ENCODE measurements at regions of chr7 and their contacts with region 1.

Region 1: GRCh38 chr7:141533149-141533949 is 17.9 kb upstream of the AGK start:
- DNase-seq: peak in 4 of 5 donors; percentile 50 to 58 (median 51)
- H3K4me3 ChIP-seq: no peak overlapping the region
- H3K4me3 Mint-ChIP-seq: no peak overlapping the region
- H3K27ac ChIP-seq: no peak overlapping the region
- H3K27ac Mint-ChIP-seq: peak overlapping the region in 4 of 7 donors; percentile 4 to 65 (median 25)
- H3K4me1 ChIP-seq: no peaks in the 10 kb centered on the region
- H3K4me1 Mint-ChIP-seq: peaks cover 0 to 4% (median 1%) of the 10 kb centered on the region in 4 donors
- H3K27me3 ChIP-seq: peaks cover 5% of the 10 kb centered on the region
- H3K27me3 Mint-ChIP-seq: peaks cover 14 to 24% of the 10 kb centered on the region in 2 donors

Region 2: GRCh38 chr7:140924019-140924820 is 609.1 kb before region 1 on chr7:
- CTCF ChIA-PET with region 1: no interaction called
- POLR2A ChIA-PET with region 1: no interaction called
- intact Hi-C with region 1: loop called (anchors 10 kb)
- DNase-seq: peak; percentile 79 to 92 (median 83)
- H3K4me3 ChIP-seq: peak overlapping the region; percentile 68 to 90
- H3K4me3 Mint-ChIP-seq: no peak overlapping the region
- H3K27ac ChIP-seq: peak overlapping the region; percentile 95
- H3K27ac Mint-ChIP-seq: no peak overlapping the region
- H3K4me1 ChIP-seq: peaks cover 28% of the 10 kb centered on the region
- H3K4me1 Mint-ChIP-seq: peaks cover 11 to 29% (median 18%) of the 10 kb centered on the region in 4 donors
- H3K27me3 ChIP-seq: no peaks in the 10 kb centered on the region
- H3K27me3 Mint-ChIP-seq: peaks cover 0 to 4% of the 10 kb centered on the region in 2 donors

Region 3: DNA sequence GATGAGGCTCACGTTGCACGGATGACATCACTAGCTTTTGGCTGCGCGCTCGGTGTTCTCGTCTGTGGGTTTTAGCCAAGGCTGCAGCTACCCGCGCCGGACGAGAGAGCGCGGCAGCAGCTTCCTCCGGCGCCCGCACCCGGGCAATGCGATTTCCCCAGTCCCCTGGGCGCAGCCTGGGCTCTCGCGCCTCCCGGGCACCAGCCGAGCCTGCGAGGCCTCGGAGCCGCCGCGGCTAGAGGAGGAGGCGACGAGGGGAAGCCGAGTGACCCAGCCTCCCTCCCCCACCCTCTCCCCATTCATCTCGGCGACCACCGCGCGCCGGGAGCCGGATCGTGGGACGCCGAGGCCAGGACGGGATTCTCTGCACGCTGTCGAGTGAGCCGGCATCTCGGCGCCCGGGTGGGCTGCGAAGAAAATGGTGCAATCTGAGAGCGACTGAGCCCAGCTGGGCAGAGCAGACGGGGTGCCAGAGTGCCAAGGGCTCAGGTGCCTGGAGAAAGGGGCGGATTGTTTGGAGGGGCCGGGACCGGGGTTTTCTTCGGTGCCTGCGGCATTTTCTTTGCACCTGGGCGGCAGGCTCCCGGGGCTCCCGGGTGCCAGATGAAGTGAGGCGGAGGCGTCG is 460.7 kb before region 1 on chr7:
- CTCF ChIA-PET with region 1: interaction called, 5 read pairs
- POLR2A ChIA-PET with region 1: no interaction called
- intact Hi-C with region 1: loop called (anchors 2 kb)
- DNase-seq: peak in 2 of 5 donors; percentile 21 to 30
- H3K4me3 ChIP-seq: peak overlapping the region; percentile 30 to 59
- H3K4me3 Mint-ChIP-seq: peak overlapping the region; percentile 82 to 94 (median 86)
- H3K27ac ChIP-seq: no peak overlapping the region
- H3K27ac Mint-ChIP-seq: peak overlapping the region in 1 of 7 donors; percentile 16
- H3K4me1 ChIP-seq: peaks cover 24% of the 10 kb centered on the region
- H3K4me1 Mint-ChIP-seq: peaks cover 9 to 35% (median 20%) of the 10 kb centered on the region in 4 donors
- H3K27me3 ChIP-seq: peaks cover 17% of the 10 kb centered on the region
- H3K27me3 Mint-ChIP-seq: peaks cover 28% of the 10 kb centered on the region in 2 donors

Region 4: DNA sequence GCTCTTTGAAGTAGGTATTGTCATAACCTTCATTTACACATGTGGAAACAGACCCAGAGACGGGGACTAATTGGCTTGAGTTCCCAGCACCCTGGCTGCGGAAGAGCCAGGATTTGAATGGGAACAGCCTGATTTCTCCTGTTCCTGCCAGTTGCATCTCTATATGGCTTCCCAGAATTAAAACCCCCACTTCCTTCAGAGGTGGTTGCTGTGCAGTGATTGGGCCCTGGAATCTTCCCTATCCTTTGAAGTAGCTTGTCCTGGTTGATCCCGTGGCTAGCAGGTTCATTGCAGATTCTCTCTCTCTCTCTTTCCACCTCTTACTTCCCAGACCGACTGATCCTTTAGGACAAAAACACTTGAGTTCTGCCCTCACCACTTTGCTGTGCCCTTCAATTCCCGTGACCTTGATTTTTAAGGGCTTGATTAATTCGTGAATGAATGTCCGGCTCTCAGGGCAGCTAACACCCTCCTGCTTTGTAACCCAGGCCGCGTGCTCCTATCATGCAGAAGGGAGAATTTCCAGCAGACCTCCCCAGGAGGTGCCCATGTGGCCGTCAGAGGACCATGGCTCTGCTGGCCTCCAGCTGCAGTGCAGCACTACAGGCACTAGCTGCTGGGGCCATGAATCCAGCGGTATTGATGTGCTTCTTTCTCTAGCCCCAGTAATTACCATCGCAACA is 102.8 kb before region 1 on chr7:
- CTCF ChIA-PET with region 1: no interaction called
- POLR2A ChIA-PET with region 1: no interaction called
- intact Hi-C with region 1: no loop called
- DNase-seq: no peak
- H3K4me3 ChIP-seq: no peak overlapping the region
- H3K4me3 Mint-ChIP-seq: no peak overlapping the region
- H3K27ac ChIP-seq: no peak overlapping the region
- H3K27ac Mint-ChIP-seq: no peak overlapping the region
- H3K4me1 ChIP-seq: no peaks in the 10 kb centered on the region
- H3K4me1 Mint-ChIP-seq: no peaks in the 10 kb centered on the region
- H3K27me3 ChIP-seq: no peaks in the 10 kb centered on the region
- H3K27me3 Mint-ChIP-seq: peaks cover 4 to 14% of the 10 kb centered on the region in 2 donors

Region 5: GRCh38 chr7:141522657-141523342 is 10.5 kb before region 1 on chr7:
- CTCF ChIA-PET with region 1: interaction called, 19 read pairs
- POLR2A ChIA-PET with region 1: no interaction called
- intact Hi-C with region 1: no loop called
- DNase-seq: no peak
- H3K4me3 ChIP-seq: no peak overlapping the region
- H3K4me3 Mint-ChIP-seq: no peak overlapping the region
- H3K27ac ChIP-seq: no peak overlapping the region
- H3K27ac Mint-ChIP-seq: no peak overlapping the region
- H3K4me1 ChIP-seq: no peaks in the 10 kb centered on the region
- H3K4me1 Mint-ChIP-seq: no peaks in the 10 kb centered on the region
- H3K27me3 ChIP-seq: no peaks in the 10 kb centered on the region
- H3K27me3 Mint-ChIP-seq: peaks cover 0 to 7% of the 10 kb centered on the region in 2 donors

Region 6: DNA sequence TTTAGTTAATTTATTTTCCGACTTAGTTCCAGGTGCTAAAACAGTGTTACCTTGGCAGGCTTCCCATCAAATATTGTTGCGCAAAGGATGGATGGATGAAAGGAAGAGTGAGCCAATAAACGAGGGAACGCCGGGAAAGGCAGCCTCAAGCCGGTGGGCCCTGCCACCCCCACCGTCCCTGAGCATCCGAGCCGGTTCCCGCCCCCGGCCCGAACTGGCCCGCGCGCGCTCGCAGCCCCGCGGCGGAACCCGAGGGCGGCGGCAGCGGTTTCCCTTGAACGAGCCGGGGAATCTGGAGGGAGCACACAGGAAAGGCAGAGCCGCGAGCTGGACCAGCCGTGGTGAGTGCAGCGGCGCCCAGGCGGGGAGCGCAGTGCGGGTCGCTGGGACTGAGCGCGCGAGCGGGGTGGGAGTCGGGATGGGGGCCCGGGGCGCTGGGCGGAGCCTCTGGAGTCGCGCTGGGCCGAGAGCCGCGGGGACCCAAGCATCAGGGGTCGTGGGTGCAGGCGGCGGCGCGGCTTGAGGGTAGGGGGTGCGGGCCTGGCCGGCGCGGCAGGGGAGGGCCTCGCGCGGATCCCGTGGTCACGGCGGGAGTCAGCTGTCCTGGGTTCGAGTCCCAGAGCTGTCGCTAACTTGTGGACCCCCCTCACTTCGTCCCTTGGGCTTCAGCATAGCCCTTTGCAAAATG is 17.9 kb after region 1 on chr7 and contains the start of gene AGK:
- CTCF ChIA-PET with region 1: interaction called, 23 read pairs
- POLR2A ChIA-PET with region 1: no interaction called
- intact Hi-C with region 1: no loop called
- DNase-seq: peak; percentile 72 to 80 (median 75)
- H3K4me3 ChIP-seq: peak within 1 kb of the TSS; percentile 32 to 70
- H3K4me3 Mint-ChIP-seq: peak within 1 kb of the TSS; percentile 78 to 96 (median 93)
- H3K27ac ChIP-seq: peak within 1 kb of the TSS; percentile 56
- H3K27ac Mint-ChIP-seq: peak within 1 kb of the TSS; percentile 50 to 96 (median 91)
- H3K4me1 ChIP-seq: peaks cover 28% of the 10 kb centered on the region
- H3K4me1 Mint-ChIP-seq: peaks cover 20 to 40% (median 34%) of the 10 kb centered on the region in 4 donors
- H3K27me3 ChIP-seq: no peaks in the 10 kb centered on the region
- H3K27me3 Mint-ChIP-seq: peaks cover 0 to 2% of the 10 kb centered on the region in 2 donors
- total RNA-seq, gene AGK: 28.1 to 30.0 TPM

Region 7: DNA sequence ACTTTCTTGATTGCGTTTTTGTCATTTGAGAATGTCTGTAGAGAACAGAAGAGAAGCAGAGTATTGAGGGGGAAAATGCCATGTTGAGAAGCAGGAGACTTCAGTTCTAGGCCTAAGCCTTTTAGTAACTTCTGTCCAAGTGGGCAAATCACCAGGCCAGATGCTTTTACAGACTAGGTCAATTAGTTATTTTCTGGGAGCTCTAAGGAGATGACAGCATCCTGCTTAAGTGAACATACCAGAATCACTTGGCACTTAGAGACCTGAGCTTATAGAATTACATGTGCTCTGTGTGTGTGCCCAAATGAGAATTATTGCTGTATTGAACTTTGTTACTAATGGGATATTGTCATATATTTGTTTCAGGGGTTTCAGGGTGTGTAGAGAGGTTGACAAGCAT is 41.8 kb after region 1 on chr7:
- CTCF ChIA-PET with region 1: interaction called, 11 read pairs
- POLR2A ChIA-PET with region 1: no interaction called
- intact Hi-C with region 1: no loop called
- DNase-seq: no peak
- H3K4me3 ChIP-seq: no peak overlapping the region
- H3K4me3 Mint-ChIP-seq: no peak overlapping the region
- H3K27ac ChIP-seq: no peak overlapping the region
- H3K27ac Mint-ChIP-seq: peak overlapping the region in 2 of 7 donors; percentile 49 to 51
- H3K4me1 ChIP-seq: no peaks in the 10 kb centered on the region
- H3K4me1 Mint-ChIP-seq: peaks cover 0 to 3% (median 0%) of the 10 kb centered on the region in 4 donors
- H3K27me3 ChIP-seq: no peaks in the 10 kb centered on the region
- H3K27me3 Mint-ChIP-seq: no peaks in the 10 kb centered on the region

Measured in CD4-positive, alpha-beta memory T cell (primary cell).